ENCODE measurements at regions of chr14 and their contacts with region 1.

Region 1: GRCh38 chr14:77151918-77152588 is 10.5 kb upstream of the ZDHHC22 start:
- DNase-seq: no peak
- H3K4me3 Mint-ChIP-seq: no peak overlapping the region
- H3K27ac Mint-ChIP-seq: no peak overlapping the region
- H3K4me1 Mint-ChIP-seq: no peaks in the 10 kb centered on the region
- H3K27me3 Mint-ChIP-seq: peaks cover 32% of the 10 kb centered on the region

Region 2: DNA sequence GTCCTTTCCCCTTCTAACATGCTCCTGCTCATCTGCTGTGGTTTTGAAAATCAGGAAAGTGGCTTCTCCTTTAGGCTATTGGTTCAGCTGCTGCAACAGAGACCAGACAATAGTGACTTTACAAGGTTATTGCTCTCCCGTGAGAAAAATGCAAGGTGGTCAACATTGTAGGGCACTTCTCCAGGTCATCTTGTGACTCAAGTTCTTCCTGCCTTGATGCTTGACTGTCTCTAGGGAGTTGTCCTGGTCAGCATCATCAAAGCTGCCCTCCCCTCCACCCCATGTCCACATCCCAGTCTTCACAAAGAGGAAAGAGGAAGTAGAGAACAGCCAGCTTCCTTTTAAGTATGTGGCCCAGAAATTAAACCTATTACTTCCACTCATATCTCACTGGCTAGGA is 25.6 kb after region 1 on chr14:
- CTCF ChIA-PET with region 1: no interaction called
- POLR2A ChIA-PET with region 1: no interaction called
- DNase-seq: no peak
- H3K4me3 Mint-ChIP-seq: no peak overlapping the region
- H3K27ac Mint-ChIP-seq: no peak overlapping the region
- H3K4me1 Mint-ChIP-seq: peaks cover 15% of the 10 kb centered on the region
- H3K27me3 Mint-ChIP-seq: peaks cover 29% of the 10 kb centered on the region

Region 3: GRCh38 chr14:77212943-77213678 is 61.1 kb after region 1 on chr14:
- CTCF ChIA-PET with region 1: interaction called, 16 read pairs
- POLR2A ChIA-PET with region 1: no interaction called
- DNase-seq: peak; percentile 44
- H3K4me3 Mint-ChIP-seq: no peak overlapping the region
- H3K27ac Mint-ChIP-seq: no peak overlapping the region
- H3K4me1 Mint-ChIP-seq: no peaks in the 10 kb centered on the region
- H3K27me3 Mint-ChIP-seq: peaks cover 24% of the 10 kb centered on the region

Region 4: DNA sequence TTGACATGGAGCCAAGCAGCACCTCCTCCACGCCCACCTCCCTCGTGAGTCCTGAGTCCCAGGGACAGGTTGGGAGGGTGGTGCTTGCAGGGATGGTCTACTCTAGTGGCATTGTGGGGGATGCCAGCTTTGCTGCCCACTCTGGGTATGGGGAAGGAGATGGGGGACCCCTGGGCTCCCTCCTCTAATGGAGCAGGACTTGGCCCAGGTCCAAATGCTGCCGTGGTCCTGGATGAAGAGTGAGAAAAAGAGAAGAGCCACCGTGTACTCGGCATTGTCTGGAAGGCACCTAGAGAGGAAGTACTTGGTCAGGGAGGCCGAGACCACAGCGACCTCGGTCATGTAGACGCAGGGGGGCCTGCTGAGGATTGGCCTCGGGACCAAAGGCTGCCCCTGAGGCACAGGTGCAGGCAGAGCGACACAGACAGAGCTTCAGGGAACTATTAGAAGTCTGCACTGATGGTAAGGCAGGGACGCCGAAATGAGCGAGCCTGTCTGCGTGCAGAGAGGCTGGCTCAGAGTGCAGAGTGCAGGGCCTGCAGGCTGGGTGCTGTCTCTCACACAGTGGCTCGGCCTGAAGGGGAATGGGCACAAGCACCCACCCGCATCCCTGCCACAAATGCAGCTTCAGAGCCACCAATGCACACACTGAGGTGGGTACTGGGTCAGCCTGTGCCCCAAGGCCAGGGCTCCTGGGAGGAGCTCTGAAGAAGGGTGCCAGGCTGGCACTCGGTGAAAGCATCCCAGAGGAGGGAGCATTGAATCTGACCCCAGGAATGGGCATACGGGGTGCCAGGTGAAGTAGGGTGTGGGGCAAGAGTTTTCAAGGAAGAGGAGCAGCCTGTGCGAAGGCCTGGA is 101.5 kb after region 1 on chr14:
- CTCF ChIA-PET with region 1: no interaction called
- POLR2A ChIA-PET with region 1: no interaction called
- DNase-seq: no peak
- H3K4me3 Mint-ChIP-seq: no peak overlapping the region
- H3K27ac Mint-ChIP-seq: no peak overlapping the region
- H3K4me1 Mint-ChIP-seq: no peaks in the 10 kb centered on the region
- H3K27me3 Mint-ChIP-seq: peaks cover 3% of the 10 kb centered on the region

Region 5: DNA sequence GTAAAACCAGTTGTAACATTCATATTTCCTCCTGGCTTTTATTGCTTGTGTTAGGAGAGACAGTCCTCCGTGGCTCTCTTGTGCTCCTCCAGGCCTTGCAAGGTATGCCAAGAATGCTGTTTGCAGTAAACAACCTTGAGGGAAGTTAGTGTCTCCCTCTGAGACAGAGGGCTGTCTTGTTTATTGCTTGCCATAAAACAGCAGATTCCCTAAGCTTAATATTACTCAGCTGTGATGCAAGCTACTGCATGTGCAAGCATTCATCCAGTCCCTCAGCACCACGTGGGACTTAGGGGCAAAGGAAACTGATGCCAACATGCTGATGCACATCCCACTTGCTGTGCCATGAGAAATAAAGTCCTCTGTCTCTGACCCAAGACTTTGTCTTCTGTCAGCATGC is 162.0 kb after region 1 on chr14:
- CTCF ChIA-PET with region 1: interaction called, 64 read pairs
- POLR2A ChIA-PET with region 1: interaction called, 3 read pairs
- DNase-seq: no peak
- H3K4me3 Mint-ChIP-seq: no peak overlapping the region
- H3K27ac Mint-ChIP-seq: no peak overlapping the region
- H3K4me1 Mint-ChIP-seq: peaks cover 3% of the 10 kb centered on the region
- H3K27me3 Mint-ChIP-seq: no peaks in the 10 kb centered on the region